ENCODE measurements at regions of chr1 and their contacts with region 1.

Region 1: GRCh38 chr1:204431310-204432165 is 19.9 kb upstream of the PPP1R15B start:
- DNase-seq: peak; percentile 91
- ATAC-seq: peak; percentile 89
- H3K4me3 Mint-ChIP-seq: no peak overlapping the region
- H3K27ac Mint-ChIP-seq: no peak overlapping the region
- H3K4me1 Mint-ChIP-seq: peaks cover 3% of the 10 kb centered on the region
- H3K27me3 Mint-ChIP-seq: no peaks in the 10 kb centered on the region
- CTCF ChIP-seq: peak; percentile 91

Region 2: GRCh38 chr1:204207136-204207616 is 224.4 kb before region 1 on chr1:
- CTCF ChIA-PET with region 1: no interaction called
- POLR2A ChIA-PET with region 1: no interaction called
- intact Hi-C with region 1: no loop called
- DNase-seq: peak; percentile 86
- ATAC-seq: peak; percentile 98
- H3K4me3 Mint-ChIP-seq: no peak overlapping the region
- H3K27ac Mint-ChIP-seq: no peak overlapping the region
- H3K4me1 Mint-ChIP-seq: peaks cover 5% of the 10 kb centered on the region
- H3K27me3 Mint-ChIP-seq: peaks cover 22% of the 10 kb centered on the region
- CTCF ChIP-seq: peak; percentile 96

Region 3: GRCh38 chr1:204411451-204412204 is 19.9 kb before region 1 on chr1 and contains the start of gene PPP1R15B:
- CTCF ChIA-PET with region 1: interaction called, 31 read pairs
- POLR2A ChIA-PET with region 1: interaction called, 3 read pairs
- intact Hi-C with region 1: no loop called
- DNase-seq: peak; percentile 97
- ATAC-seq: peak; percentile 92
- H3K4me3 Mint-ChIP-seq: peak within 1 kb of the TSS; percentile 99
- H3K27ac Mint-ChIP-seq: peak within 1 kb of the TSS; percentile 100
- H3K4me1 Mint-ChIP-seq: peaks cover 19% of the 10 kb centered on the region
- H3K27me3 Mint-ChIP-seq: no peaks in the 10 kb centered on the region
- CTCF ChIP-seq: no peak
- total RNA-seq, gene PPP1R15B: 63.8 to 64.6 TPM

Region 4: DNA sequence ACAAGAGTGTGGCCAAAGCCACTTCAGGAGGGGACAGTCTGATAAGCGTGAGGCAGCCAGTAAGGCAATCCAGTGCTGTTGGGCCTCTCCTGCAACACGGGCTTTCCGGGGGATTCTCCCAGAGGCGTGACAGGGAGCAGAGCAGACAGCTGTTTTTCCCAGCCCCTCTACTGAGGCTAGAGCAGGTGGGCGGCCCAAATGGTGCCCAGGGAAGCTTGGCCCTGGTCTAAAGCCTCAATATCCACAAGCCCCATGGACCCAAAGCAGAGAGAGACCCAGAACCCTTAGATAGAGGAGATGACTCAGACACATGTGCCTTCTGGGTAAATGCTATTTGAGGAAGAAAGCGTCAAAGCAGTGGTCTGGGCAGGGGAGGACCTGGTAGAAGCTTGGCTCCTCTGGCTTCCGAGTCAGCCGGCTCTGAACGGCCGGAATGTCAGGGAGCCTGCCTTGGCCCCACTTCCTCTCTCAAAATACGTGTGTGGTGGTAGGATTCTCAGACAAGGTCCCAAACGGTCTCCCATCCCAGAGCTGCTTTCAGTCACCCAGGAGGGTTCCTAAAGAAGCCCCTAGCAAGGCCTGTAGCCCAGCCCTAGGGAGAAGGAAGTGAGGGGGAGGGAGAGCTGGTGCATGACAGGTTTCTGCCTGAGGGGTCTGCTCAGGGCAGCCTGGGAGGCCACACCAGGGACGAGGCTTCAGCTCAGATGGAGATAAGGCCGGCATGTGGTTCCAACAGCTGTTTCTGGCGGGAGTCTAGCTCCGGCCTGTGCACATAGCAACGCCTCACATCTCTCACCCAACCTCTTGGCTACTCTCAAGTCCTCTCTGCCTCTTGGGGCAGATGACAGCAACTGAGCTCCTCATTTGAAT is 34.2 kb after region 1 on chr1:
- CTCF ChIA-PET with region 1: interaction called, 10 read pairs
- POLR2A ChIA-PET with region 1: no interaction called
- intact Hi-C with region 1: no loop called
- DNase-seq: no peak
- ATAC-seq: no peak
- H3K4me3 Mint-ChIP-seq: no peak overlapping the region
- H3K27ac Mint-ChIP-seq: peak overlapping the region; percentile 39
- H3K4me1 Mint-ChIP-seq: peaks cover 53% of the 10 kb centered on the region
- H3K27me3 Mint-ChIP-seq: no peaks in the 10 kb centered on the region
- CTCF ChIP-seq: no peak

Region 5: GRCh38 chr1:204487256-204487615 is 55.7 kb after region 1 on chr1:
- CTCF ChIA-PET with region 1: interaction called, 1,122 read pairs
- POLR2A ChIA-PET with region 1: interaction called, 3 read pairs
- intact Hi-C with region 1: no loop called
- DNase-seq: no peak
- ATAC-seq: no peak
- H3K4me3 Mint-ChIP-seq: no peak overlapping the region
- H3K27ac Mint-ChIP-seq: no peak overlapping the region
- H3K4me1 Mint-ChIP-seq: peaks cover 31% of the 10 kb centered on the region
- H3K27me3 Mint-ChIP-seq: no peaks in the 10 kb centered on the region
- CTCF ChIP-seq: no peak

Region 6: DNA sequence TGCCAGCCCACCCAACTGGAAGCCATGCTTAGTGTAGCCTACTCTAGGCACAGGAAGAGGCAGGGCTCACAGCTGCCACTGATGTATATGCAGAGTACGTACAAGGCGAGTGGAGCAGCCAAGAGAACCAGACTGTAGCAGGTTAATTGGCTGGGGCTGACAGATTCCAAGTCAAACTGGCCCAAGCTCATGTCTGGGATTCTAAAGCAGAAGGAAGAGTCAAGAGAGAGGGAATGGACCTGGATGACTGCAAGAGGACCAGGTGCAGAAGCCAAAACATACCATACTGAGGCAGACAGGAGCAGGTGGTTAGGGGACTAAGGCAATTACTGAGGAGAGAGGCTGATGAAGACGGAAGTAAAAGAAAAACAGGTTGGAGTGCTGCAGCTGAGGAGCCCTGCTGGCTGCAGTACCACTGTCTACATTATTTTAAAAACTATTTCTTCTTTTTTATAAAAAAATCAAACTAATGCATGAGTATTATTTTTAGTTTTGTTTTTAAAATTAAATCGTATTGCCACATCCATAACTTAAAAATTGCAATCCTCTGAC is 305.4 kb after region 1 on chr1:
- CTCF ChIA-PET with region 1: no interaction called
- POLR2A ChIA-PET with region 1: no interaction called
- intact Hi-C with region 1: no loop called
- DNase-seq: no peak
- ATAC-seq: no peak
- H3K4me3 Mint-ChIP-seq: no peak overlapping the region
- H3K27ac Mint-ChIP-seq: no peak overlapping the region
- H3K4me1 Mint-ChIP-seq: no peaks in the 10 kb centered on the region
- H3K27me3 Mint-ChIP-seq: peaks cover 4% of the 10 kb centered on the region
- CTCF ChIP-seq: no peak

Measured in activated CD8-positive, alpha-beta T cell treated with anti-CD3 and anti-CD28 coated beads for 36 hours (primary cell).